Activated CD4-positive, alpha-beta memory T cell treated with anti-CD3 and anti-CD28 coated beads for 36 hours (primary cell): ENCODE measurements at regions of chr16 and their contacts with region 1.

Region 1: DNA sequence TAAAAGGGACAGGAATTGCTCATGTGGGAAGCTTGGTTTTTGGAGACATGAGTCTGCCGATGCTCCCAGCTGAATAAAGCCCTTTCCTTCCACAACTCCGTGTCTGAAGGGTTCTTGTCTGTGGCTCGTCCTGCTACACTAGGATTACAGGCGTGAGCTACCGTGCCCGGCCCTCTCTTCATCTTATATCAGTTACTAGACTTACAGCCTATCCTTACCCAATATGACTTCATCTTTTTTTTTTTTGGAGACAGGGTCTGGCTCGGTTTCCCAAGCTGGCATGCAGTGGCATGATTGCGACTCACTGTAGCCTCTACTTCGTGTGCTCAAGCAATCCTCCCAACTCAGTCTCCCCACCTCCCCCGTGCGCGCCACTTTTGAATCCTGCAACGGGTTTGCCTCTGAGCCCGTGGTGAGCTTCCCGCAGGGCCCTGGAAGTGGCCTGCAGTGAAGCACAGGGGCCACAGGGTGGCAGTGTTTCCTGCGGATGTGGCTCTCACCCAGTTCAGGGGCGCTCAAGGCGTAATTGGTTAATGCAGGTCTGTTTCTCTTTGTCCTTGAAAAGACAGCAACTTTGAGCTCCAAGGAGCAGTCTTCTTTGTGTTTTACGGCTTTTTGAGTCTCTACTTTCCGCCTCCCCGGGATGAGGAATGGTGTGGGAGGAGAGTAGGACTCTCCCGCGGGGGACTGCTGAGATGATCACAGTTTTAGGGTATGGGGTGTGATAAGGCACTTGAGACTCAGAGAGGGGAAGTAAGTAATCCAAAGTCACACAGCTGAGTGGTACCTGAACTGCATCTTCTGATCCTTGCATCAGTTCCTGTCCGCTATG is 22.7 kb upstream of the GPRC5B start:
- DNase-seq: peak; percentile 81
- H3K4me3 Mint-ChIP-seq: no peak overlapping the region
- H3K27ac Mint-ChIP-seq: no peak overlapping the region
- H3K4me1 Mint-ChIP-seq: peaks cover 2% of the 10 kb centered on the region
- H3K27me3 Mint-ChIP-seq: peaks cover 4% of the 10 kb centered on the region

Region 2: DNA sequence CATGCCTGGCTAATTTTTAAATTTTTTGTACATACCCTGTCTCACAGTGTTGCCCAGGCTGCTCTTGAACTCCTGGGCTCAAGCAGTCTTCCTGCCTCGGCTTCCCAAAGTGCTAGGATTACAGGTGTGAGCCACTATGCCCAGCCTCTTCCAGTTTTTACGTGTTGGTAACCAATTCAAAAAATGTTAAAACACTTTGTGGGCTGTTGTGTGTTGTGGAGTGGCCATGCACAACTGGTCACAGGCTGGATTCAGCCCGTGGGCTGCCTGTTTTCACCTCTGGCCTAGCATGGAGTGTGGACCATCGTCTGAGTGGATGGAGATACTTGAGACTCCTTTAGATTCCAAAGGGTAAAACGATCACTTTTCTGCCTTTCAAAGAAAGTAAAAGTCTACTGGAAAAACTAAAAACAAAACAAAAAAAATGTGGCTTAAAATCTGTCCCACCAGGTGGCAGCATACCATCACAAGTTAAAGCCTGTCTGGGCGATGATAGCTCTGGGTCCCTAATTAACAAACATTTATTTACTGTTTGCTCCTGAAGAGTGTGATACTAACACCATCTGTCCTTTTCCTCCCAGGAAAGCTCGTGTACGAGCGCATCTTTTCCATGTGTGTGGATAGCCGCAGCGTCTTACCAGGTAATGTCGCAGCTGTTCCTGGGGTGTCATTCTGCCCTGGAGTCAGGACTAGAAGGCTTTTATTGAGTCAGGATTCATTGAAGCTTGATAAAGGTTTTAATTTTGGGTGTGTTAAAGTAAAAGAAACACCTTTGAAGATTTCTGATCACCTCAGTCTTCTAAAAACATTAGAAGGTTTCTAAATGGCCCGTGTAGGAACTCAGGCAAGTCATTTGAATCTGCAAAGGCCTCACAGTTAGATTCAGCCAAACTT is 306.0 kb before region 1 on chr16:
- CTCF ChIA-PET with region 1: interaction called, 10 read pairs
- POLR2A ChIA-PET with region 1: no interaction called
- intact Hi-C with region 1: no loop called
- DNase-seq: peak; percentile 25
- H3K4me3 Mint-ChIP-seq: no peak overlapping the region
- H3K27ac Mint-ChIP-seq: no peak overlapping the region
- H3K4me1 Mint-ChIP-seq: peaks cover 1% of the 10 kb centered on the region
- H3K27me3 Mint-ChIP-seq: no peaks in the 10 kb centered on the region

Region 3: GRCh38 chr16:19935699-19936098 is 28.3 kb after region 1 on chr16:
- CTCF ChIA-PET with region 1: no interaction called
- POLR2A ChIA-PET with region 1: no interaction called
- intact Hi-C with region 1: no loop called
- DNase-seq: no peak
- H3K4me3 Mint-ChIP-seq: no peak overlapping the region
- H3K27ac Mint-ChIP-seq: no peak overlapping the region
- H3K4me1 Mint-ChIP-seq: no peaks in the 10 kb centered on the region
- H3K27me3 Mint-ChIP-seq: peaks cover 7% of the 10 kb centered on the region

Region 4: GRCh38 chr16:19974607-19975006 is 67.2 kb after region 1 on chr16:
- CTCF ChIA-PET with region 1: no interaction called
- POLR2A ChIA-PET with region 1: no interaction called
- intact Hi-C with region 1: no loop called
- DNase-seq: no peak
- H3K4me3 Mint-ChIP-seq: no peak overlapping the region
- H3K27ac Mint-ChIP-seq: no peak overlapping the region
- H3K4me1 Mint-ChIP-seq: no peaks in the 10 kb centered on the region
- H3K27me3 Mint-ChIP-seq: peaks cover 11% of the 10 kb centered on the region

Region 5: GRCh38 chr16:20300312-20301097 is 393.1 kb after region 1 on chr16:
- CTCF ChIA-PET with region 1: interaction called, 64 read pairs
- POLR2A ChIA-PET with region 1: no interaction called
- intact Hi-C with region 1: loop called (anchors 1 kb)
- DNase-seq: peak; percentile 52
- H3K4me3 Mint-ChIP-seq: no peak overlapping the region
- H3K27ac Mint-ChIP-seq: no peak overlapping the region
- H3K4me1 Mint-ChIP-seq: no peaks in the 10 kb centered on the region
- H3K27me3 Mint-ChIP-seq: peaks cover 4% of the 10 kb centered on the region